Lower leg skin (tissue), 4 donors: ENCODE measurements at regions of chr13 and their contacts with region 1.

Region 1: GRCh38 chr13:80359778-80360465 is 19.0 kb upstream of the SPRY2 start:
- DNase-seq: no peak
- H3K4me3 ChIP-seq: no peak overlapping the region
- CTCF ChIP-seq: no peak
- POLR2A ChIP-seq: no peak

Region 2: DNA sequence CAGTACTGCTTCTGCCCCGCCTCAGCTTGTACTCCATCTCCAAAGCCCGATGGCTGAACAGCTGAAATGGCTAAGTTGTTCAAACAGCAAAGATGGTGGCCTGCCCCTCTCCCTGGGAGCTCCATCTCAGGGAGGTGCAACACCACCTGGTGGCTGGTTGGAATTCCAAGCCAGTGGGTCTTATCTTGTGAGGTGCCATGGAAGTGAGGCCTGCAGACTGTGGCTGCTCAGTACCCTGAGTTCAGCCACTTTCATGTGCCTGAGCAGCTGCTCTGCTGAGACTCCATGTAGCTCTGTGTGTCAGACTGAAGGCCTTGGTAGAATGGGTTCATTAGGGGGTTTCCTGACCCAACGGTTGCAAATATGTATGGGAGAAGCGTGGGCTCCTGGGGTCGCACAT is 48.3 kb after region 1 on chr13:
- intact Hi-C with region 1: no loop called
- DNase-seq: no peak
- H3K4me3 ChIP-seq: no peak overlapping the region
- CTCF ChIP-seq: no peak
- POLR2A ChIP-seq: no peak

Region 3: GRCh38 chr13:80524447-80525215 is 164.7 kb after region 1 on chr13:
- intact Hi-C with region 1: loop called (anchors 5 kb)
- DNase-seq: no peak
- H3K4me3 ChIP-seq: no peak overlapping the region
- CTCF ChIP-seq: no peak
- POLR2A ChIP-seq: no peak